Activated CD4-positive, alpha-beta T cell treated with anti-CD3 and anti-CD28 coated beads for 36 hours (primary cell): ENCODE measurements at regions of chr18 and their contacts with region 1.

Region 1: DNA sequence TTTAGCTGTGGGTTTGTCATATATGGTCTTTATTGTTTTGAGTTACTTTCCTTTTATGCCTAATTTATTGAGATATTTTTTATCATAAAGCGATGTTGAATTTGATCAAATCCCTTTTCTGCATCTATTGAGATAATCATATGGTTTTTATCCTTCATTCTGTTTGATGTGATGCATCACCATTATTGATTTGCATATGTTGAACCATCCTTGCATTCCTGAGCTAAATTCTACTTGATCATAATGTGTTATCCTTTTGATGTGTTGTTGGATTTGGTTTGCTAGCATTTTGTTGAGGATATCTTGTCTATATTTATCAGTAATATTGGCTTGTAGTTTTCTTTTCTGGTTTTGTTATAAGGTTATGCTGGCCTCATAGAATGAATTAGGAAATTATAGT is 308.5 kb downstream of the ADCYAP1 start:
- DNase-seq: no peak
- ATAC-seq: no peak
- H3K4me3 Mint-ChIP-seq: no peak overlapping the region
- H3K27ac Mint-ChIP-seq: no peak overlapping the region
- H3K4me1 Mint-ChIP-seq: no peaks in the 10 kb centered on the region
- H3K27me3 Mint-ChIP-seq: no peaks in the 10 kb centered on the region

Region 2: GRCh38 chr18:961644-962355 is 251.3 kb before region 1 on chr18:
- CTCF ChIA-PET with region 1: no interaction called
- POLR2A ChIA-PET with region 1: no interaction called
- intact Hi-C with region 1: no loop called
- DNase-seq: peak; percentile 70
- ATAC-seq: no peak
- H3K4me3 Mint-ChIP-seq: no peak overlapping the region
- H3K27ac Mint-ChIP-seq: no peak overlapping the region
- H3K4me1 Mint-ChIP-seq: peaks cover 4% of the 10 kb centered on the region
- H3K27me3 Mint-ChIP-seq: peaks cover 9% of the 10 kb centered on the region

Region 3: DNA sequence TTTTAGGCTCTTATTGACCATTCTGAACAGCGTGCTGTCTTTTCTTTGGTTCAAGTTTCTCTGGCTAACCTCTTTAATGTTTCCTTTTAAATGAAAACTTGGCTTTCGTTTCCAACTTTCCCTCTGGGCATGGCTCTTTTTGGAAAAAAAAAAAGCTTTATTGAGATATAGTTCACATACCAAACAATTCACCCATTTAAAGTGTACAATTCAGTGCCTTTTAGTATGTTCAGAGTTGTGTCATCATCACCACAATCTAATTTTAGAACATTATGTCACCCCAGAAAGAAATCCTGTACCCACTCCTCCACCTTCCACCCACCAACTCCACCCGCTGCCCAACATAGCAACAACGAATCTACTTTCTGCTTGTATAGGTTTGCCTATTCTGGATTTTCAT is 13.9 kb after region 1 on chr18:
- CTCF ChIA-PET with region 1: no interaction called
- POLR2A ChIA-PET with region 1: no interaction called
- intact Hi-C with region 1: no loop called
- DNase-seq: no peak
- ATAC-seq: no peak
- H3K4me3 Mint-ChIP-seq: no peak overlapping the region
- H3K27ac Mint-ChIP-seq: no peak overlapping the region
- H3K4me1 Mint-ChIP-seq: no peaks in the 10 kb centered on the region
- H3K27me3 Mint-ChIP-seq: no peaks in the 10 kb centered on the region

Region 4: DNA sequence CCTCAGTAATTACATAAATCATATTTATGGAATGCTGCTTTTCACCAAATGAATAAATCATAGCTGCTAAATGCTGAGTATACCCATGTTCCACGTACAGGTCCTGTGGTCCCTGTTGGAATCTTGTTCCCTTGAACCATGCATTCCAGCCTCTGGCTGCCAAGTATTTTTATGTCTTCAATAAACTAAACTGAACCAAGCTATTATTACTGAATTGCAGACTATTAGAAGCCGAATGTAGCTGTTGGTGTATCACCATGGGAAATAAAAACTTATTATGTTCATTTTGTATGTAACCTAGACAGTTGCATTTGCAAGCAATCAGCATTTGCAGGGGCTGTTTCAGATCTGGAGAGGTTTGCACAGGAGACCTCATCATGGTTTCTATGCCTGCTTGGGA is 53.9 kb after region 1 on chr18:
- CTCF ChIA-PET with region 1: no interaction called
- POLR2A ChIA-PET with region 1: no interaction called
- intact Hi-C with region 1: loop called in 1 of 2 experiments (anchors 5 kb)
- DNase-seq: no peak
- ATAC-seq: no peak
- H3K4me3 Mint-ChIP-seq: no peak overlapping the region
- H3K27ac Mint-ChIP-seq: no peak overlapping the region
- H3K4me1 Mint-ChIP-seq: no peaks in the 10 kb centered on the region
- H3K27me3 Mint-ChIP-seq: no peaks in the 10 kb centered on the region